Caco-2 (cell line): ENCODE measurements at regions of chr17 and their contacts with region 1.

Region 1: GRCh38 chr17:19744922-19745757 is 3.0 kb downstream of the ALDH3A1 start:
- DNase-seq: no peak
- H3K4me3 ChIP-seq: no peak overlapping the region
- H3K4me3 Mint-ChIP-seq: no peak overlapping the region
- H3K27ac Mint-ChIP-seq: no peak overlapping the region
- H3K4me1 ChIP-seq: peaks cover 28% of the 10 kb centered on the region
- H3K4me1 Mint-ChIP-seq: peaks cover 24% of the 10 kb centered on the region
- H3K27me3 ChIP-seq: no peaks in the 10 kb centered on the region
- H3K27me3 Mint-ChIP-seq: no peaks in the 10 kb centered on the region
- CTCF ChIP-seq: peak in 1 of 2 experiments; percentile 7

Region 2: DNA sequence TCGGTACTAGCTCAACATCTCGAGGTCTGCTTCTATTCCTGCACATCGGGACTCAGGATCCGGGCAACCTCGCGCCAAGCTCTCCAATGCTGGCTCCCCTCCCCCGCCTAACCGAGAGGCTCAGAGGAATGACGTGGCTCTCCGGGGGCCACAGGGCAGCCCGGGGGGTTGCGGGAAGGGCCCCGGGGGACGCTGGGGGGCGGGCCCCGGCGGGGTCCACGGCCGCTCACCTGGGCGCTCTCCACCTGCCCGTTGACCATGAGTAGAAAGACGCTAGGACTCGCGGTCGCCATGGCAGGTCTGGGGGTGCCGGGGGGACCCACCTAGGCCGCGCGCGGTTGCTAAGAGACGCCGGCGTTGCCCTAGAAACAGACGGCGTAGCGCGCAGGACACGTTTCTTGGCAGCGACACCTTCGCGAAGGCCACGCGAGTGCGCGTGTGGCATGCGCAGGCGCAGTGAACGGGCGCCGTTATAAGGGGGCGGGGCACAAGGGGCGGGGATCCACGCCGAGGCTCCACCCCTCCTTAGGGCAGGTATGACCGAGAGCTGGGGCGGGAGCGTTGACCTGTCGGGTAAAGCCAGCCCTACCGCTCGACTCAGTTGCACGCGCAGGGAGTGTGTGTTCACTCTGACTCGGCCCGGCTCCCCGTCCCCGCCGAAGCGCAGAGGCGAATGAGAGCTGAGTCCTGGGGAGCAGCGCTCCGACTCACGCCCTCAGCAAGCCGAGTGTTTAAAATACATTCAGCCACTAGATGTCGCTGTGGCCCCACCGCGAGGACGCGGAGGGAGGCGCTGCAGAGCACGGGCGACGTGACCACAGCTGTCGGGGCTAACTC is 382.6 kb before region 1 on chr17 and contains the start of gene B9D1:
- CTCF ChIA-PET with region 1: no interaction called
- POLR2A ChIA-PET with region 1: no interaction called
- intact Hi-C with region 1: no loop called
- DNase-seq: peak; percentile 93 to 94
- H3K4me3 ChIP-seq: peak within 1 kb of the TSS; percentile 81
- H3K4me3 Mint-ChIP-seq: peak within 1 kb of the TSS; percentile 80
- H3K27ac Mint-ChIP-seq: peak within 1 kb of the TSS; percentile 68
- H3K4me1 ChIP-seq: peaks cover 6% of the 10 kb centered on the region
- H3K4me1 Mint-ChIP-seq: no peaks in the 10 kb centered on the region
- H3K27me3 ChIP-seq: no peaks in the 10 kb centered on the region
- H3K27me3 Mint-ChIP-seq: no peaks in the 10 kb centered on the region
- CTCF ChIP-seq: peak; percentile 94 to 98
- total RNA-seq, gene B9D1: 8.1 and 11.5 TPM in 2 replicates

Region 3: DNA sequence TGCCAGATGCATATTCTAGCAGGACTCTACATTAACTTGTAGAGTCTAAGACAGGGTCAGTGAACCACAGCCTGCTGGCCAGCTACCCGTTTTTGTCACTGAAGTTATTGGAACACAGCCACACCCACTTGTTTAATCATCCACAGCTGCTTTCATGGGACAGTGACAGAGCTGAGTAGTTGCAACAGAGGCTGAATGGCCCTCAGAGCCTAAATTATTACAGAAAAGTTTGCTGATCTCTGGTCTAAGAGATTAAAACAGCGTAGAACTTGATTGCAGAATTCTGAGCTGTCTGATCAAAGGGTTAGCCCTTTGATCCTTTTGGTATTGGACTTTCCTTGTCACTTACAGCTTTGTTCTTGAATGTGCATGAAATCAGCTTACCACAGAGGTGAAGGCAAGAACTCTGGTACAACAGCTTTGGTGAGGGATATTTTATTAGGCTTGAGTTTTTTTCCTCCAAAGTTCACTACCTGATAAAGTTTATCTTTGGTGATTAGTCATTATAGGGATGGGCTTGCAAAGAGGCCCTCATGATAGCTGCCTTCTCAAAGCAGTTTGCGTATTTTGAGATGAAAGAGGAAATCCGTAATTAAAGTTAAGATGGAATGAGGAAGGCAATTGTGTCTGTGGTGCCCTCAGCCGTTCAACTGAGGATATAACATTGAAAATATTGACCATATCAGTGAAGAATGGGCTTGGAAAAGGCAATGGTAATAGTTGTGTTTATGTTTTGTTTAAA is 73.0 kb before region 1 on chr17:
- CTCF ChIA-PET with region 1: no interaction called
- POLR2A ChIA-PET with region 1: no interaction called
- intact Hi-C with region 1: loop called (anchors 5 kb)
- DNase-seq: peak; percentile 75 to 80
- H3K4me3 ChIP-seq: no peak overlapping the region
- H3K4me3 Mint-ChIP-seq: peak overlapping the region; percentile 51
- H3K27ac Mint-ChIP-seq: peak overlapping the region; percentile 70
- H3K4me1 ChIP-seq: peaks cover 36% of the 10 kb centered on the region
- H3K4me1 Mint-ChIP-seq: peaks cover 35% of the 10 kb centered on the region
- H3K27me3 ChIP-seq: no peaks in the 10 kb centered on the region
- H3K27me3 Mint-ChIP-seq: no peaks in the 10 kb centered on the region
- CTCF ChIP-seq: peak; percentile 41 to 54

Region 4: GRCh38 chr17:19718604-19719354 is 26.4 kb before region 1 on chr17:
- CTCF ChIA-PET with region 1: no interaction called
- POLR2A ChIA-PET with region 1: no interaction called
- intact Hi-C with region 1: no loop called
- DNase-seq: peak in 1 of 2 experiments; percentile 45
- H3K4me3 ChIP-seq: no peak overlapping the region
- H3K4me3 Mint-ChIP-seq: no peak overlapping the region
- H3K27ac Mint-ChIP-seq: no peak overlapping the region
- H3K4me1 ChIP-seq: peaks cover 44% of the 10 kb centered on the region
- H3K4me1 Mint-ChIP-seq: peaks cover 12% of the 10 kb centered on the region
- H3K27me3 ChIP-seq: no peaks in the 10 kb centered on the region
- H3K27me3 Mint-ChIP-seq: no peaks in the 10 kb centered on the region
- CTCF ChIP-seq: peak in 1 of 2 experiments; percentile 8